Lower leg skin (tissue), 4 donors: ENCODE measurements at regions of chr2 and their contacts with region 1.

Region 1: GRCh38 chr2:213723041-213723560 is 438.8 kb downstream of the SPAG16 start:
- DNase-seq: no peak
- H3K4me3 ChIP-seq: no peak overlapping the region
- CTCF ChIP-seq: no peak
- POLR2A ChIP-seq: no peak

Region 2: DNA sequence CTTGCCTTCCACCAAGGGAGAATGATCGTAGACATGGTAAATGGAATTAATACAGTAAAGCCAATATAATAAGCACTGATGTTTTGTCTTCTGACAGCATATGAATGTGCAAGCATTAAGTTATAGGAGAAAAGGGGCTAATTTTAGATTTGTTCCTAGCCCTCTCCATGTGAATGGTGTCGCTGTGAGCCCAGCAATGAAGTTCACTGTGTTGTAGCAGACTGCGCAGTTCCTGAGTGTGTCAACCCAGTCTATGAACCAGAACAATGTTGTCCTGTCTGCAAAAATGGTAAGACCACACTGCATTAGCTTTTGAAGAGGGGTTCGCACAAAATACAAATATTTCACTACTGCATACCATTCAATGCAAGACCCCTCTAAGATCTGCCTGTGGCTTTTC is 713.4 kb after region 1 on chr2:
- intact Hi-C with region 1: loop called (anchors 10 kb)
- DNase-seq: no peak
- H3K4me3 ChIP-seq: no peak overlapping the region
- CTCF ChIP-seq: no peak
- POLR2A ChIP-seq: no peak